CD4-positive, alpha-beta memory T cell (primary cell): ENCODE measurements at regions of chr5 and their contacts with region 1.

Region 1: DNA sequence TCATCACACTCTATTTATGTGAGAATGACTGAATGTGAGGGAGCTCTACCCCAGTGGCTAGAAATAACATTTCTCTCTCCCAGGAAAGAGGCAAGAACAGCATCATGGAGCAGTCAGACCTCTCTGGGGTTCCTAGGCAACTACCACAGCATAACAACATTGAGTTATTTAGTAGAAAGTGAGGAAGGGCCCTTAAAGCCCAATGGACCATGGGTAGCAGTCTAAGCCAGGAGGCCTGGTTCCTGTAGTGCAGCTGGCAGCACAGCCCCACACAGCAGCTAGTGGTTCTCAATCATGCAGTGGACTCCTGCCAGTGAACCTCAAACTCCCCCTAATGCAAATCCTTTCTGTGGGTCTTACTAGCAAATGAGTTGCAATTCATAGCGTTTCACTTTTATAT is 55.3 kb downstream of the SPEF2 start:
- DNase-seq: peak; percentile 32 to 63 (median 54)
- H3K4me3 ChIP-seq: no peak overlapping the region
- H3K4me3 Mint-ChIP-seq: peak overlapping the region in 7 of 8 donors; percentile 31 to 76 (median 47)
- H3K27ac ChIP-seq: peak overlapping the region; percentile 7
- H3K27ac Mint-ChIP-seq: peak overlapping the region; percentile 68 to 92 (median 86)
- H3K4me1 ChIP-seq: peaks cover 58% of the 10 kb centered on the region
- H3K4me1 Mint-ChIP-seq: peaks cover 43 to 68% (median 54%) of the 10 kb centered on the region in 4 donors
- H3K27me3 ChIP-seq: no peaks in the 10 kb centered on the region
- H3K27me3 Mint-ChIP-seq: no peaks in the 10 kb centered on the region

Region 2: DNA sequence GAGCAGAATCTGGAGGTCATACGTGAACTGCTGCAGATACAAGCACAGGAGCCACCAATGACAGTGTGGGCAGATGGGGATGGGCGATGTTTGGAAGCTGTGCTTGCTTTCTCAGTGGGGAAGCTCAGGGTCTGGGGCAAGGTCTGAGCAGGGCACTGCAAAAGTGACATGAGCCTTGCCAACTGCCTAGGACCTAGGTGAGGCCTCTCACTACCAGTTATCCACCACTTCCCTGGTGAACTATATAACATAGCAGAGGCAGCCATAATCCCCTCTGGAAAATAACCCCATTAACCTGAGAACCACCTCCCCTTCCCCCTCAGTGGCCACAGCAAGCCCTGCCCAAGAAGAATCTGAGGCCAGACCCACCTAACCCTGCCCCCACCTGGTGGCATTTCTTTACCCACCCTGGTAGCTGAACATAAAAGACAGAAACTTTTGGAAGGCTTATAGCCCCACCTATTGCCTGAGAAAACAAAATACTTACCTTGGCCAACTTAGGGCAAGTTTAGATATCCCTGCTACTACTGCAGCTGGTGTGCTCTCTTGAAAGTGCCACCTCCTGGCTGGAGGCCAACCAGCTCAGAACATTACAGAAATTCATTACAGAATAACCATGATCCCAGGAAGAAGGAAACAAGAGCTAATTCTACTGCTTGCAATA is 74.2 kb before region 1 on chr5:
- CTCF ChIA-PET with region 1: no interaction called
- POLR2A ChIA-PET with region 1: no interaction called
- intact Hi-C with region 1: no loop called
- DNase-seq: peak in 1 of 5 donors; percentile 31
- H3K4me3 ChIP-seq: no peak overlapping the region
- H3K4me3 Mint-ChIP-seq: no peak overlapping the region
- H3K27ac ChIP-seq: no peak overlapping the region
- H3K27ac Mint-ChIP-seq: no peak overlapping the region
- H3K4me1 ChIP-seq: no peaks in the 10 kb centered on the region
- H3K4me1 Mint-ChIP-seq: no peaks in the 10 kb centered on the region
- H3K27me3 ChIP-seq: no peaks in the 10 kb centered on the region
- H3K27me3 Mint-ChIP-seq: peaks cover 31% of the 10 kb centered on the region in 2 donors

Region 3: GRCh38 chr5:35657877-35658276 is 15.1 kb before region 1 on chr5:
- CTCF ChIA-PET with region 1: interaction called, 11 read pairs
- POLR2A ChIA-PET with region 1: interaction called, 11 read pairs
- intact Hi-C with region 1: no loop called
- DNase-seq: peak in 1 of 5 donors; percentile 18
- H3K4me3 ChIP-seq: no peak overlapping the region
- H3K4me3 Mint-ChIP-seq: peak overlapping the region in 2 of 8 donors; percentile 29 to 47
- H3K27ac ChIP-seq: no peak overlapping the region
- H3K27ac Mint-ChIP-seq: peak overlapping the region in 5 of 7 donors; percentile 1 to 86 (median 45)
- H3K4me1 ChIP-seq: no peaks in the 10 kb centered on the region
- H3K4me1 Mint-ChIP-seq: peaks cover 6 to 23% (median 13%) of the 10 kb centered on the region in 4 donors
- H3K27me3 ChIP-seq: no peaks in the 10 kb centered on the region
- H3K27me3 Mint-ChIP-seq: no peaks in the 10 kb centered on the region

Region 4: DNA sequence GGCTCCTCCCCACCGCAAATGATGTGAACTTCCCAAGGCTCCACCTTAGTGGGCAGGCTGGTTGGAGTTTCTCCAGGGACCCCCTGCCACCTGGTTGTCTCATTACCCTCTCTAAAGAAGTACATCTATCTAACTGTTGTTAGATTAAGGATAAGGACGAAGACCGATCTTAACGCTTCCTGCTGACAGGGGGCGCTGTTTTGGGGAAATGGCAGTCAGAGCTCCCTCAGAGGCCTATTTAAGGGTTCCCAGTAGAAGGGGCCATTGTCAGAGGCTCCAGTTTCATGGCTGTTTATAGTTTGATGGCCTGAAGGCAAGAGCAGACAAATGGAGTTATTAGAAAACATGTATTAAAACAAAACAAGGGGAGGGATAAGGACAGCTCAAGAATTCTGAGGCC is 44.7 kb after region 1 on chr5:
- CTCF ChIA-PET with region 1: no interaction called
- POLR2A ChIA-PET with region 1: no interaction called
- intact Hi-C with region 1: loop called (anchors 5 kb)
- DNase-seq: no peak
- H3K4me3 ChIP-seq: no peak overlapping the region
- H3K4me3 Mint-ChIP-seq: no peak overlapping the region
- H3K27ac ChIP-seq: no peak overlapping the region
- H3K27ac Mint-ChIP-seq: peak overlapping the region in 1 of 7 donors; percentile 56
- H3K4me1 ChIP-seq: no peaks in the 10 kb centered on the region
- H3K4me1 Mint-ChIP-seq: peaks cover 0 to 3% (median 0%) of the 10 kb centered on the region in 4 donors
- H3K27me3 ChIP-seq: no peaks in the 10 kb centered on the region
- H3K27me3 Mint-ChIP-seq: no peaks in the 10 kb centered on the region

Region 5: GRCh38 chr5:35857606-35858205 is 184.7 kb after region 1 on chr5:
- CTCF ChIA-PET with region 1: no interaction called
- POLR2A ChIA-PET with region 1: interaction called, 64 read pairs
- intact Hi-C with region 1: loop called (anchors 1 kb)
- DNase-seq: peak in 3 of 5 donors; percentile 41 to 45 (median 44)
- H3K4me3 ChIP-seq: peak overlapping the region; percentile 82 to 85
- H3K4me3 Mint-ChIP-seq: peak overlapping the region; percentile 88 to 99 (median 96)
- H3K27ac ChIP-seq: peak overlapping the region; percentile 97
- H3K27ac Mint-ChIP-seq: peak overlapping the region; percentile 94 to 100 (median 100)
- H3K4me1 ChIP-seq: peaks cover 55% of the 10 kb centered on the region
- H3K4me1 Mint-ChIP-seq: peaks cover 42 to 73% (median 51%) of the 10 kb centered on the region in 4 donors
- H3K27me3 ChIP-seq: no peaks in the 10 kb centered on the region
- H3K27me3 Mint-ChIP-seq: no peaks in the 10 kb centered on the region

Region 6: GRCh38 chr5:35902046-35902676 is 229.2 kb after region 1 on chr5:
- CTCF ChIA-PET with region 1: no interaction called
- POLR2A ChIA-PET with region 1: no interaction called
- intact Hi-C with region 1: no loop called
- DNase-seq: peak in 2 of 5 donors; percentile 12 to 14
- H3K4me3 ChIP-seq: no peak overlapping the region
- H3K4me3 Mint-ChIP-seq: peak overlapping the region in 2 of 8 donors; percentile 1 to 21
- H3K27ac ChIP-seq: no peak overlapping the region
- H3K27ac Mint-ChIP-seq: peak overlapping the region in 5 of 7 donors; percentile 29 to 62 (median 50)
- H3K4me1 ChIP-seq: peaks cover 42% of the 10 kb centered on the region
- H3K4me1 Mint-ChIP-seq: peaks cover 24 to 63% (median 49%) of the 10 kb centered on the region in 4 donors
- H3K27me3 ChIP-seq: no peaks in the 10 kb centered on the region
- H3K27me3 Mint-ChIP-seq: no peaks in the 10 kb centered on the region

Region 7: DNA sequence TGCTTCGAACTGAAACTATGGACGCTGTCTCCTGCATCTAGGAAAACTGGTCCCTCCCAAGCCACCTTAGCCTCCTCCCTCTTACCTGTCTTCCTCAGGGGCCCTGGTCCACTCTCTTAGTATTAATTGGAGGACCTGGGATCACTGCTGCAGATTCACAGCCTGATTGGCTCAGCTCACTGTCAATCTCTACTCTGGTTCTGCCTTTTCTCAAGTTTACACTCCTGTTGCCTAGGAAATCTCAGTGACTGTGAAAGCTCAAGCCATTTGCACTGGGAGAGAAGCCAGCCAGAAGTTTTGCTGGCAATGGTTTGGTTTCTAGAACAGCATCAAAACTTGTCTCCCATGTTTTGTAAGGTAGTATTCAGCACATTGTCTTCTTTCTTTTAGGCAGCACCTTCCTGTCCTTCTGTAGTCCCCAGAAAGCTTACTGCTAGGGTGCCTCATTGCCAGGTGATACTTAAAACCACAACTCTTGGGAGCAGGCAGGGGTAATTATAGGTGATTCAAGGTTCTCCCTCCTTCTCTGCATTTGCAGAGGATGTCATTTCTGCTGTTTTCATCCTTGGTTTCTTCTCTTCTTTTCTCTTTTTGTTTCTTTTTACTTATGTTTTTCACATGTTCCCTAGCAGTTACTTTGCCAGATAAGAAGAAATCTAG is 265.7 kb after region 1 on chr5 and contains the start of gene CAPSL:
- CTCF ChIA-PET with region 1: no interaction called
- POLR2A ChIA-PET with region 1: no interaction called
- intact Hi-C with region 1: no loop called
- DNase-seq: no peak
- H3K4me3 ChIP-seq: no peak within 1 kb of the TSS
- H3K4me3 Mint-ChIP-seq: no peak within 1 kb of the TSS
- H3K27ac ChIP-seq: no peak within 1 kb of the TSS
- H3K27ac Mint-ChIP-seq: no peak within 1 kb of the TSS
- H3K4me1 ChIP-seq: no peaks in the 10 kb centered on the region
- H3K4me1 Mint-ChIP-seq: no peaks in the 10 kb centered on the region
- H3K27me3 ChIP-seq: no peaks in the 10 kb centered on the region
- H3K27me3 Mint-ChIP-seq: peaks cover 11 to 15% of the 10 kb centered on the region in 2 donors
- total RNA-seq, gene CAPSL: not detected